CD4-positive, alpha-beta memory T cell (primary cell): ENCODE measurements at regions of chrX and their contacts with region 1.

Region 1: GRCh38 chrX:13487731-13488523 is 81.5 kb upstream of the EGFL6 start:
- DNase-seq: peak; percentile 45 to 65 (median 58)
- H3K4me3 ChIP-seq: no peak overlapping the region
- H3K4me3 Mint-ChIP-seq: peak overlapping the region in 2 of 8 donors; percentile 38 to 58
- H3K27ac ChIP-seq: no peak overlapping the region
- H3K27ac Mint-ChIP-seq: peak overlapping the region; percentile 57 to 89 (median 70)
- H3K4me1 ChIP-seq: peaks cover 12% of the 10 kb centered on the region
- H3K4me1 Mint-ChIP-seq: peaks cover 7 to 15% (median 13%) of the 10 kb centered on the region in 4 donors
- H3K27me3 ChIP-seq: no peaks in the 10 kb centered on the region
- H3K27me3 Mint-ChIP-seq: no peaks in the 10 kb centered on the region

Region 2: GRCh38 chrX:13428055-13428786 is 59.7 kb before region 1 on chrX:
- CTCF ChIA-PET with region 1: no interaction called
- POLR2A ChIA-PET with region 1: no interaction called
- intact Hi-C with region 1: no loop called
- DNase-seq: no peak
- H3K4me3 ChIP-seq: no peak overlapping the region
- H3K4me3 Mint-ChIP-seq: no peak overlapping the region
- H3K27ac ChIP-seq: no peak overlapping the region
- H3K27ac Mint-ChIP-seq: peak overlapping the region in 1 of 7 donors; percentile 0
- H3K4me1 ChIP-seq: no peaks in the 10 kb centered on the region
- H3K4me1 Mint-ChIP-seq: peaks cover 0 to 4% (median 1%) of the 10 kb centered on the region in 4 donors
- H3K27me3 ChIP-seq: no peaks in the 10 kb centered on the region
- H3K27me3 Mint-ChIP-seq: no peaks in the 10 kb centered on the region

Region 3: GRCh38 chrX:13473442-13474163 is 14.3 kb before region 1 on chrX:
- CTCF ChIA-PET with region 1: interaction called, 12 read pairs
- POLR2A ChIA-PET with region 1: interaction called, 7 read pairs
- intact Hi-C with region 1: no loop called
- DNase-seq: peak in 3 of 5 donors; percentile 12 to 26 (median 16)
- H3K4me3 ChIP-seq: peak overlapping the region in 1 of 2 donors; percentile 32
- H3K4me3 Mint-ChIP-seq: peak overlapping the region; percentile 68 to 89 (median 78)
- H3K27ac ChIP-seq: peak overlapping the region; percentile 18
- H3K27ac Mint-ChIP-seq: peak overlapping the region; percentile 66 to 97 (median 89)
- H3K4me1 ChIP-seq: peaks cover 19% of the 10 kb centered on the region
- H3K4me1 Mint-ChIP-seq: peaks cover 8 to 28% (median 17%) of the 10 kb centered on the region in 4 donors
- H3K27me3 ChIP-seq: no peaks in the 10 kb centered on the region
- H3K27me3 Mint-ChIP-seq: no peaks in the 10 kb centered on the region

Region 4: DNA sequence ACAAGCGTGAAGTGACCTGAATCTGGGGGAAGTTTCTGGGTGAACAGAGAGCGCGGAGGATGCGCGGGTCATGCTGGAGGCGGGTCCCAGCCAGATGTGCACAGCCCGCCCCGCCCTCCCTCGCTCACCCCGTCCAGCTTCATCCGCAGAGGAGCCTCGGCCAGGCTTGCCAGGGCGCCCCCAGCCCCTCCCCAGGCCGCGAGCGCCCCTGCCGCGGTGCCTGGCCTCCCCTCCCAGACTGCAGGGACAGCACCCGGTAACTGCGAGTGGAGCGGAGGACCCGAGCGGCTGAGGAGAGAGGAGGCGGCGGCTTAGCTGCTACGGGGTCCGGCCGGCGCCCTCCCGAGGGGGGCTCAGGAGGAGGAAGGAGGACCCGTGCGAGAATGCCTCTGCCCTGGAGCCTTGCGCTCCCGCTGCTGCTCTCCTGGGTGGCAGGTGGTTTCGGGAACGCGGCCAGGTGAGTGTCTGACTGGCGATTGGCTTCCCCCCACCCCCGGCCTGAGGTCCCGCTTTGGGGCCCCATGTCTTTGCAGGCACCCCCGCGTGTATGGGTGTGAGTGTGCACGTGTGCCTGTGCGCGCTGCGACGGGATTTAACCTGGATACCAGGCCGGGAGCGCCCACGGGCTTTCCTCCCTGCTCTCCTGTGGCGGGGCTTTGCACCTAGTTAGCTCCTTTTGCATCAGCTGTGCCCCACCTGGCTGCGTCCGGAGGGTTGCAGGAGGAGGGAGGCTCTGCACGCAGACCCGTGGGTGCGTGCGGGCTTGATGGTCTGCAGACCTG is 81.7 kb after region 1 on chrX and contains the start of gene EGFL6:
- CTCF ChIA-PET with region 1: no interaction called
- POLR2A ChIA-PET with region 1: no interaction called
- intact Hi-C with region 1: no loop called
- DNase-seq: no peak
- H3K4me3 ChIP-seq: no peak within 1 kb of the TSS
- H3K4me3 Mint-ChIP-seq: peak within 1 kb of the TSS; percentile 2 to 75 (median 49)
- H3K27ac ChIP-seq: no peak within 1 kb of the TSS
- H3K27ac Mint-ChIP-seq: no peak within 1 kb of the TSS
- H3K4me1 ChIP-seq: no peaks in the 10 kb centered on the region
- H3K4me1 Mint-ChIP-seq: peaks cover 3 to 12% (median 7%) of the 10 kb centered on the region in 4 donors
- H3K27me3 ChIP-seq: no peaks in the 10 kb centered on the region
- H3K27me3 Mint-ChIP-seq: peaks cover 10 to 14% of the 10 kb centered on the region in 2 donors
- total RNA-seq, gene EGFL6: not detected